Thyroid gland (tissue), 4 donors: ENCODE measurements at regions of chr4 and their contacts with region 1.

Region 1: GRCh38 chr4:183074296-183074990 is 24.6 kb upstream of the WWC2 start:
- DNase-seq: no peak
- H3K4me3 ChIP-seq: no peak overlapping the region
- H3K27ac ChIP-seq: no peak overlapping the region
- H3K4me1 ChIP-seq: peaks cover 0 to 3% of the 10 kb centered on the region in 2 donors
- H3K27me3 ChIP-seq: no peaks in the 10 kb centered on the region
- CTCF ChIP-seq: no peak
- POLR2A ChIP-seq: no peak

Region 2: DNA sequence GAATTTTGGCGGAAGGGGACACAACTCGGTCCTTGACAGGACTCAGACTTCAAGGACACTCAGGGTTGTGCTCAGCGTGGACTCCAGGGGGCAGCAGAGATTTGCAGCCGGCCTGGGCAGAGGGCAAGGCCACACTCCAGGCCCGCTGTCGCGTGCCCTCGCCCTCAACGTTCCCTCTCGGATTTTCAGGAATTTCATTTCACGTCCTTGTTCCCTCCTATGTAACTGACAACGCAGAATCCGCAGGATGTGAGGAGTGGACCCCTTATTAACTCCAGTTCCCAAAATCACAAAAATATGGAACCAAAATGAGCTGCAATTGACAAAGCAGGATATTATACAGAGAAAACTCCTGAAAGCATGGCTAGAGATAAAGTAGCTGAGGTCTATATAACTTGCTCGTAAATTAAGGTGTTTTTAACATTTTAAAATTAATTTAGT is 136.2 kb before region 1 on chr4:
- intact Hi-C with region 1: loop called (anchors 10 kb)
- DNase-seq: peak; percentile 71 to 80
- H3K4me3 ChIP-seq: no peak overlapping the region
- H3K27ac ChIP-seq: no peak overlapping the region
- H3K4me1 ChIP-seq: no peaks in the 10 kb centered on the region
- H3K27me3 ChIP-seq: no peaks in the 10 kb centered on the region
- CTCF ChIP-seq: peak; percentile 60 to 91 (median 86)
- POLR2A ChIP-seq: no peak

Region 3: DNA sequence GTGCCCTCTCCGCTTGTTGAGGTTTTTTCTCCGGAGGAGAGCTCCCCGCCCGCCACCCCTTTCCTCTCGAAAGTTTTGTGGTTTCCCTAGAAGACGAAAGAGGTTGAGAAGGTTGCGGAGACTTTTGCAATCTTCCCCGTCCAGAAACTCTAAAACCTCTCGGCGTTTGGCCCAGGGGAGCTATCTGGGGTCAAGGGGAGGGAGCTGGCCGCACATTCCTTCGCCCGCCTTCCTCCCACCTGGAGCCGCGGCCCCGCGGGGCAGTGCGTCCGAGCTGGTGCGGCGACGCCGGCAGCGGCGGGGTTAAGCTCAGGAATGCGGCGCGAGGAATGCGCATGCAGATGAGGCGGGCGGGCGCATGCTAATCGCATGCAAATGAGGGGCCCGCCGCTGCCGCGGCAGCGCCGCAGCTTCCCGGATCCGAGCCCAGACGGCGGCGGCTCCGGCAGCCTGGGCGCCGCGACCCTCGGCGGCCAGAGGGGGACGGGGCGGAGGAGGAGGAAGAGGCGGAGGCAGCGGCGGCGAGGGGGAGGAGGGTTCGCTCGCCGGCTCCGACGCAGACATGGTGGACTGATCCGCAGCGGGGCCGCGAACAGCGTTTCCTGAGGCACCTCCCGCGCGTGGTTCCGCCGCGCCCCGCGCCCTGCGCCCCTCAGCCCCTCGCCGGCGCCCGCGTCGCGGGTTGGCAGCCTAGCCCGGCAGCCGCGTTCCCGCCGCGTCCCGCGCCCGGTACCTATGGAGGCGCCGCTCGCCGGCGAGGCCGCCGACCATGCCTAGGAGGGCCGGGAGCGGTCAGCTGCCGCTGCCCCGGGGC is 24.5 kb after region 1 on chr4 and contains the start of gene WWC2:
- intact Hi-C with region 1: no loop called
- DNase-seq: peak; percentile 94 to 95
- H3K4me3 ChIP-seq: peak within 1 kb of the TSS; percentile 55 to 100 (median 85)
- H3K27ac ChIP-seq: peak within 1 kb of the TSS; percentile 97 to 99 (median 98)
- H3K4me1 ChIP-seq: peaks cover 24 to 32% of the 10 kb centered on the region in 2 donors
- H3K27me3 ChIP-seq: no peaks in the 10 kb centered on the region
- CTCF ChIP-seq: peak in 1 of 6 experiments; percentile 37
- POLR2A ChIP-seq: peak; percentile 39 to 97
- total RNA-seq, gene WWC2: 44.6 to 87.4 (median 53.5) TPM

Region 4: DNA sequence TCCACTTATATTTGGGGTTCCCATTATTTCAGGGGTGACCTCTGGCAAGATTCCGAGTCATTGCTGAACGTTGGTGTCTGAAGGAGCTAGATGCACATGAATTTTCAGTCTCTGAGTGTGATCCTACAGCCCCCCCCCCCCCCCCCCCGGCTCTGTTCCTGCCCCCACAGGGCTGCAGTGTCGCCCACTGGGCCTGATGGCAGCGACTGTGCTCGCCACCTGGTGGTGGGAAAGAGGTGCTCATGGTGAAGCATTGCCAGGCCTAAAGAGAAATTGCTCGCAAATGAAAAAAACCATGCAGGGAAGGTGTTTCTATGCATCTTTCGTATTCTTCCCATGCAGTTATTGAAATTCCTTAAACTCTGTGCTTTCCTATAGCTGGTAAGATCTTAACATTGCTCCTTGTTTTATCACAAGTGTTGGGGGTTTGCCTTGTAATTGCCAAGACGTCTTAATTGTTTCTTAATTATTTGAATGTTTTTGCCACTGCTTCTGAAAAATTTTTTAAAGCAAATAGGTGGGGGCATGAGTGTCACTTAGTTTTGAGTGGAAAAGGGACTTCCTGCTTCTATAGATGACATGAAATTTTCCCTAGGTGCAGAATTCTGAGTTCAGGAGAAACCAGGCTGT is 182.4 kb after region 1 on chr4:
- intact Hi-C with region 1: loop called (anchors 5 kb)
- DNase-seq: peak; percentile 42 to 56
- H3K4me3 ChIP-seq: no peak overlapping the region
- H3K27ac ChIP-seq: no peak overlapping the region
- H3K4me1 ChIP-seq: peaks cover 0 to 3% of the 10 kb centered on the region in 2 donors
- H3K27me3 ChIP-seq: no peaks in the 10 kb centered on the region
- CTCF ChIP-seq: peak; percentile 47 to 83 (median 51)
- POLR2A ChIP-seq: no peak